CD8-positive, alpha-beta T cell (primary cell): ENCODE measurements at regions of chr14 and their contacts with region 1.

Region 1: DNA sequence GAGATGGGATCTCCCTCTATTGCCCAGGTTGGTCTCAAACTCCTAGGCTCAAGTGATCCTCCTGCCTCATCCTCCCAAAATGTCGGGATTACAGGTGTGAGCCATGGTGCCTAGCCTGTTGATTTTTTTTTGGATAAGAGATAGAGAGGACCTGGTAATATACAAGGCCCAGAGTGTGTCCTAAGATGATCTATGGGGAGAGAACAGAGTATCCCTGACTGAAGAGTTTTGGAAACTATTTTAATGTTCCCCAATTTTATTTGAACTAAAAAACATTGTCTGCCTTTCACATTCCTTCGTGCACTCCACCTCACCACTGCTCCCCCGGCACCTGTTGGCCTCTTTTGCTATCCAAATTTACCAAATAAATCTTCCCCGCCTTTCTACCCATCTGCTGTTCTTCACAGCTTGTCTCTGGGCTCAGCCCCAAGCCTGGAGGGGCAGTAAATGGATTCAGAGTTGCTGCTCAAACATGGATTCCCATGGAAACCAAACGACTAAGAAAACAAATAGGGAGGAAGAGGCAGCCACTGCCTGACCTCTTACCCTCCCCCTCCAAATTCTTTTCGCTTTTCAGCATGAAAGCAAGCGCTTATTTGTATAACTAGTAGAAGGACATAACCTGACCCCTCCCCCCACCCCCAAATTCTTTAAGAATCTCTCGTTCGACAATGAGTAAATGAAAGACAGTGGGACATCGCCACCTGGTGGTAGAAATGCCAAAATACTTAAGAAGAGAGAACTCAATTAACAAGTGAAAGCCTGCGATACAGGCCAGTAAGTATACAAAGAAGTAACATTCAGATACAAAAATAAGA is 22.6 kb downstream of the OR10G3 start:
- DNase-seq: peak; percentile 55 to 89 (median 77)
- ATAC-seq: peak; percentile 73
- H3K4me3 ChIP-seq: peak overlapping the region; percentile 2 to 15
- H3K4me3 Mint-ChIP-seq: peak overlapping the region; percentile 26
- H3K27ac ChIP-seq: no peak overlapping the region
- H3K27ac Mint-ChIP-seq: no peak overlapping the region
- H3K4me1 ChIP-seq: peaks cover 4% of the 10 kb centered on the region
- H3K4me1 Mint-ChIP-seq: peaks cover 6% of the 10 kb centered on the region
- H3K27me3 ChIP-seq: no peaks in the 10 kb centered on the region
- H3K27me3 Mint-ChIP-seq: no peaks in the 10 kb centered on the region
- CTCF ChIP-seq: peak; percentile 73

Region 2: DNA sequence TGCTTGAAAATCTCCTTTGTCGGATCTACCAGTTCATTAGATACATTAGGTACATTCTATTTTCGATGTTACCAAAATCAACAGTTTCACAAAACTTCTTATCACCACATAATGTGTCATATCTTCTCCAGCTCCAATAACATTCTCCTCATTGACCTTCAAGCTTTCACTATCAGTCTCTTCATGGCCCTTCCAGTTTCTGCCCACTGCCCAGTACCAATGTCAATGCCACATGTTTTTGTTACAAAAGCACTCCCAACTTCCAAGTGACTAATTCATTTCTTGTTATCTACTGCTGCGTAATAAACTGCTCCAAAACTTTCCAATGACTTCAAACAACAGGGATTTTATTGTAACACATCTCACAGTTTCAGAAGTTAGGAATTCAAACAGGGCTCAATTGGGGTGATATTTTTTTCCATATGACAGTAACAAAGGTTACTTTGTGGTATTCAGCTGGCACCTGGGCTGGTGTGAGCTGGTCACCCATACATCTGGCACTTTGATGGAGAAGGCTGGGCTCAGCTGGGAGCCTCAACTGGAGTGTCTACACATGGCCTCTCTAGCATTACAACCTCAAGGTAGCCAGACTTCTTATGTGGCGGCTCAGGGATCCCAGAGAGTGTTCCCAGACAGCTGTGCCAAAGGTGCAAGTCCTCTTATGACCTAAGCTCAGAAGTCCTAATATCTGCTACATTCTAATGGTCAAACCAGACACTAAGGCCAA is 407.5 kb before region 1 on chr14:
- CTCF ChIA-PET with region 1: no interaction called
- POLR2A ChIA-PET with region 1: no interaction called
- intact Hi-C with region 1: loop called in 1 of 2 experiments (anchors 10 kb)
- DNase-seq: no peak
- ATAC-seq: no peak
- H3K4me3 ChIP-seq: no peak overlapping the region
- H3K4me3 Mint-ChIP-seq: no peak overlapping the region
- H3K27ac ChIP-seq: no peak overlapping the region
- H3K27ac Mint-ChIP-seq: no peak overlapping the region
- H3K4me1 ChIP-seq: no peaks in the 10 kb centered on the region
- H3K4me1 Mint-ChIP-seq: no peaks in the 10 kb centered on the region
- H3K27me3 ChIP-seq: peaks cover 0 to 4% of the 10 kb centered on the region in 2 experiments
- H3K27me3 Mint-ChIP-seq: peaks cover 2% of the 10 kb centered on the region
- CTCF ChIP-seq: no peak

Region 3: DNA sequence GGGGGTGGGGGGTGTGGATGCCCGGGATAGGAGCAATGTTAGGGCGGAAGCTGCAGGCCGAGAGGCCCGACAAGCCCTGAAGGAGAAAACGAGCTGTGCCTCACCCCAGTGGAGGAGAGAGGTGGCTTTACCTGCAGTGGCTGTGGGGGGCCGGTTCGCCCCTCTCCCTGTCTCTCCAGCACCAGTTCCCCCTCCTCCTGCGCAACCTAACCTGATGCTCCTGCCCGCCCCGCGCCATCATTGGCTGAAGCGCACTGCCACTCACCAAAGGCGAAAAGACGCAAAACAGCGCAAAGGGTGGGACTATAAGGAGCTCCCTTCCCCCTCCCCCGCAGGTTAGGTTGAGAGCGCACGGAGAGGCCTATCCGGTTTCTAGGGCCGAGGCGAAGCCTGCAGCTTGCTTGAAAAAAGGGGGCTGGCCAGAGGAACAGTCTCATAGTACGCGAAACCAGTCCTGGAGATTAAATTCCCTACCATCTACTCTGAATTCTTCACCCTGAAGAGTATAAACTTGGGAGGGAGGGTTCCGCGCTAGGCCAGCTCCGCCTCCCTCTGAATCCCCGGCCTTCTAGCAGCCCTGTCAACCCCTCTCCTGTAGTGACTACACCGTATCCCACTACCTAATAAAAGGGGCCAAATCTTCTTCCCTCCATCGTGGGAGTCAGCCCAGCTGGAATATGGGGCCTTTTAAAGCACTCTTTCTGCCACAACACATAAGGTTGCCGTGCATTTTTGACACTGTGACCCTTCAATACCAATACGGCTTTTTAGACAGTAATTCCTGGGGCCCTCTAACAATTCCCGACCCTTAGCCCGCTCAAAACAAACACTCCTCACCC is 120.0 kb before region 1 on chr14:
- CTCF ChIA-PET with region 1: interaction called, 4 read pairs
- POLR2A ChIA-PET with region 1: no interaction called
- intact Hi-C with region 1: loop called (anchors 1 to 5 kb)
- DNase-seq: peak; percentile 98 to 100 (median 99)
- ATAC-seq: peak; percentile 99
- H3K4me3 ChIP-seq: peak overlapping the region; percentile 74 to 83
- H3K4me3 Mint-ChIP-seq: peak overlapping the region; percentile 96
- H3K27ac ChIP-seq: peak overlapping the region; percentile 76 to 84
- H3K27ac Mint-ChIP-seq: peak overlapping the region; percentile 91
- H3K4me1 ChIP-seq: peaks cover 28% of the 10 kb centered on the region
- H3K4me1 Mint-ChIP-seq: peaks cover 64% of the 10 kb centered on the region
- H3K27me3 ChIP-seq: no peaks in the 10 kb centered on the region
- H3K27me3 Mint-ChIP-seq: no peaks in the 10 kb centered on the region
- CTCF ChIP-seq: no peak

Region 4: DNA sequence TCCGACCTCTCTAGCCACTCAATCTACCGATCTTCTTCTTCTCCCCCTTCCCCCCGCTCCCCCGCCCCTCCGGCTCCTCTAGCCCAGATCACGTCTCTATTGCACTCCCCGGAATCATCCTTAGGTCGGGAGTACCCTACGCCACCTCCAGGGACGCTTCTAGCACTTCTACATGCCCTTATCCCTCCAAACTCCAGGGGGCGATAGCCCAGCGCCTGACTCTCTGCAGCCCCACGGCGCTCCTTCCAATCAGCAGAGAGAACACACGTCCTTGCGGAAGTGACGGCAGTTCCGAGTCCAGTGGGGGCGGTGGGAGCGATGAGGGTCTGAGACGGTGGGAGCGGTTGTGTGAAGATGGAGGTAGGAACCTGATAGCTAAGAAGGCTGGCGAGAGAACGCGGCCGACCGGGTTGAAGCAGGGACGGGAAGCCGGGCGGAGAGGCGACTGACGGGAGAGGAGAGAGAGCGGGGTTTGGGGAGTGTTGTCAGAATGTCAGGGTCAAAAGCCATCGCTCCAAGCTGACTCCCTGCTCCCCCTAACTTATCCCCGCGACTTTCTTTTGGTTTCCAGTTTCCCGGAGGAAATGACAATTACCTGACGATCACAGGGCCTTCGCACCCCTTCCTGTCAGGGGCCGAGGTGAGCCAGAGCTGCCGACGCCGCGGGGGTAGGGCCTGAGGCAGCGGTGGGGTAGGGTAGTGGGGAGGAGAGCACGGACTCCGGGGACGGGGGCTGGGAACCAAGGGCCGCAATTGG is 80.2 kb before region 1 on chr14 and contains the starts of genes RAB2B and TOX4:
- CTCF ChIA-PET with region 1: interaction called, 7 read pairs
- POLR2A ChIA-PET with region 1: no interaction called
- intact Hi-C with region 1: loop called in 1 of 2 experiments (anchors 1 kb)
- DNase-seq: peak; percentile 86 to 99 (median 95)
- ATAC-seq: peak; percentile 96
- H3K4me3 ChIP-seq: peak within 1 kb of the TSS; percentile 87 to 94
- H3K4me3 Mint-ChIP-seq: peak within 1 kb of the TSS; percentile 99
- H3K27ac ChIP-seq: peak within 1 kb of the TSS; percentile 93 to 94
- H3K27ac Mint-ChIP-seq: peak within 1 kb of the TSS; percentile 99
- H3K4me1 ChIP-seq: peaks cover 22% of the 10 kb centered on the region
- H3K4me1 Mint-ChIP-seq: peaks cover 52% of the 10 kb centered on the region
- H3K27me3 ChIP-seq: no peaks in the 10 kb centered on the region
- H3K27me3 Mint-ChIP-seq: no peaks in the 10 kb centered on the region
- CTCF ChIP-seq: peak; percentile 98
- total RNA-seq, gene RAB2B: 24.0 to 26.6 TPM
- total RNA-seq, gene TOX4: 95.0 to 100 TPM

Region 5: GRCh38 chr14:21498553-21499526 is 58.5 kb before region 1 on chr14:
- CTCF ChIA-PET with region 1: interaction called, 87 read pairs
- POLR2A ChIA-PET with region 1: no interaction called
- intact Hi-C with region 1: loop called (anchors 1 kb)
- DNase-seq: peak in 3 of 9 experiments; percentile 47 to 76 (median 67)
- ATAC-seq: peak; percentile 77
- H3K4me3 ChIP-seq: no peak overlapping the region
- H3K4me3 Mint-ChIP-seq: no peak overlapping the region
- H3K27ac ChIP-seq: peak overlapping the region; percentile 6 to 23
- H3K27ac Mint-ChIP-seq: peak overlapping the region; percentile 73
- H3K4me1 ChIP-seq: peaks cover 13% of the 10 kb centered on the region
- H3K4me1 Mint-ChIP-seq: peaks cover 19% of the 10 kb centered on the region
- H3K27me3 ChIP-seq: no peaks in the 10 kb centered on the region
- H3K27me3 Mint-ChIP-seq: no peaks in the 10 kb centered on the region
- CTCF ChIP-seq: peak; percentile 70

Region 6: DNA sequence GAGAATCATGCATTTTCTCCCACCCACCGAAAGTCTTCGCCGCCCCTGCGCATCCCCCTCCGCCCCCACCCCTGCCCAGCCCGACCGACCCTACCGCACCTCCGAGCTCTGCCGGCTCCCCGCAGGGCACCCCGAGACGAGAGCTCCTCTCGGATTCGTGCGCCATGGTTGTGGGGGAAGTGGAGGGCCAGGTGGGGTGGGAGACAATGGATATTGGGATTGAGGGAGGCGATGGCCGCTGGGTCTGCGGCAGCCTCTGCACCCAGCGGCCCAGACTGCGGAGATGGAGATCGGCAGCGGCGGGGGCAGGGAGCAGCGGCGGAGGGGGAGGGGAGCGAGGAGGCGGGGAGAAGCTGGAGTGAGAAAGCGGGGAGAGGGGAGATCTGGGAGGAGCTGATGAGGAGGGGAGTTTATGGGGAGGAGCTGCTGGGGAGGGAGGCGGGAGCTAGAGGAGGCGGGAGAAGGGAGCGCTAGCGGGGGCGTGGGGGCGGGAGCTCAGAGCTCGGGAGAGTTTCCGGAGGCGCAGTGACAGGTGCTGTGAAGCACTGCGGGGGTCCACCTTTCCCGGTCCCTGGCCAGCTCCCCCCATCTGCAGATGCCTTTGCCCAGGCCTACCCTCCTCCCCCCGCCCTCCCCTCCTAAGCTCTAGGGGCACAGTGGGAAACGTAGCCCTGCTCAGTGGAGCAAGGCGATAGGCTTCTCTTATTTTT is 31.2 kb before region 1 on chr14 and contains the start of gene SALL2:
- CTCF ChIA-PET with region 1: interaction called, 5 read pairs
- POLR2A ChIA-PET with region 1: no interaction called
- intact Hi-C with region 1: loop called in 1 of 2 experiments (anchors 2 kb)
- DNase-seq: peak; percentile 12 to 81 (median 64)
- ATAC-seq: peak; percentile 88
- H3K4me3 ChIP-seq: peak within 1 kb of the TSS; percentile 57 to 62
- H3K4me3 Mint-ChIP-seq: peak within 1 kb of the TSS; percentile 82
- H3K27ac ChIP-seq: peak within 1 kb of the TSS in 1 of 2 experiments; percentile 29
- H3K27ac Mint-ChIP-seq: peak within 1 kb of the TSS; percentile 84
- H3K4me1 ChIP-seq: peaks cover 14% of the 10 kb centered on the region
- H3K4me1 Mint-ChIP-seq: peaks cover 19% of the 10 kb centered on the region
- H3K27me3 ChIP-seq: no peaks in the 10 kb centered on the region
- H3K27me3 Mint-ChIP-seq: no peaks in the 10 kb centered on the region
- CTCF ChIP-seq: no peak
- total RNA-seq, gene SALL2: 1.4 to 1.6 TPM

Region 7: GRCh38 chr14:22112004-22112403 is 554.7 kb after region 1 on chr14:
- CTCF ChIA-PET with region 1: no interaction called
- POLR2A ChIA-PET with region 1: no interaction called
- intact Hi-C with region 1: no loop called
- DNase-seq: peak in 8 of 9 experiments; percentile 8 to 61 (median 50)
- ATAC-seq: peak; percentile 36
- H3K4me3 ChIP-seq: peak overlapping the region; percentile 31 to 37
- H3K4me3 Mint-ChIP-seq: peak overlapping the region; percentile 80
- H3K27ac ChIP-seq: no peak overlapping the region
- H3K27ac Mint-ChIP-seq: peak overlapping the region; percentile 88
- H3K4me1 ChIP-seq: no peaks in the 10 kb centered on the region
- H3K4me1 Mint-ChIP-seq: peaks cover 28% of the 10 kb centered on the region
- H3K27me3 ChIP-seq: peaks cover 0 to 2% of the 10 kb centered on the region in 2 experiments
- H3K27me3 Mint-ChIP-seq: no peaks in the 10 kb centered on the region
- CTCF ChIP-seq: peak; percentile 34